Dorsolateral prefrontal cortex (tissue), 120 donors: ENCODE measurements at regions of chr4 and their contacts with region 1.

Region 1: DNA sequence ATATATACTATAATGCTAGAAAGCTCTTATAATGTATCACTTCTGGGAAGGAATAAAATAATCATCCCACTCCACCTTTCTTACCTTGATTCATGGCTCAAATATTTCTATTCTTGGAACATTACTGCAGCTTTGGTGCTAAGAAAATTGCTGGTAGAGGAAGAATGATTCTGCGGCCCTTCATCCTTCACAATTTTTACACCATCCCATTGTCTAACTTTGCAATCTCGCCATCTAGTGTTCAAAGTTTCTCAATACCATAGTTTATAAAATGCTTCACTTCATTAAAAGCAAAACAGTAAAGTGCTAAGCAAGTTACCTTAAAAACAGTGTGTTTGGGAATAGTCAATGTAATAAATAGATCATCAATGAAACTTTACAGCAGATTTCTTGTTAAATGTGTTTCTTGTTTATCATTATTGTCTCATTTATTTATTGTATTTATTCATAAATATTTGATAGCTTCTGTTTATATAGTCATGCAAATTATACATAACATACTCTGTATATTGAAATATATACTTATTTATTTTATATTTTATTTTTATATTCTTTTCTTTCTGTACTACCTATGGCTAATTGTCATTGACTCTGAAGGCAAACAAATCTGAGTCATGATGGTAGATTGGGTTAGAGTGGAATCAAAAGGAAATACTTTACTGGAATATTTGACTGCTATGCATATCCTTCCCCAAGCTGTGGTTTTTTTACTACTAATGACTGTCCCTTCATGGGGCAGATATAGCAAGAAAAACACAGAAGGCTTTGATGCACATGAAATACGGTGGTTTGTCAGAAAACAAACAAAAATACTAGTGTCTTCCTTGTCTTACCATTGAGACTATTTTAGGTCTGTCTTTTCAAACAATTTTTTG is 390.7 kb downstream of the MAPK10 start:
- DNase-seq: no peak
- H3K4me3 ChIP-seq: no peak overlapping the region
- H3K27ac ChIP-seq: no peak overlapping the region
- H3K27me3 ChIP-seq: no peaks in the 10 kb centered on the region
- CTCF ChIP-seq: peak; percentile 51 to 89 (median 71)

Region 2: DNA sequence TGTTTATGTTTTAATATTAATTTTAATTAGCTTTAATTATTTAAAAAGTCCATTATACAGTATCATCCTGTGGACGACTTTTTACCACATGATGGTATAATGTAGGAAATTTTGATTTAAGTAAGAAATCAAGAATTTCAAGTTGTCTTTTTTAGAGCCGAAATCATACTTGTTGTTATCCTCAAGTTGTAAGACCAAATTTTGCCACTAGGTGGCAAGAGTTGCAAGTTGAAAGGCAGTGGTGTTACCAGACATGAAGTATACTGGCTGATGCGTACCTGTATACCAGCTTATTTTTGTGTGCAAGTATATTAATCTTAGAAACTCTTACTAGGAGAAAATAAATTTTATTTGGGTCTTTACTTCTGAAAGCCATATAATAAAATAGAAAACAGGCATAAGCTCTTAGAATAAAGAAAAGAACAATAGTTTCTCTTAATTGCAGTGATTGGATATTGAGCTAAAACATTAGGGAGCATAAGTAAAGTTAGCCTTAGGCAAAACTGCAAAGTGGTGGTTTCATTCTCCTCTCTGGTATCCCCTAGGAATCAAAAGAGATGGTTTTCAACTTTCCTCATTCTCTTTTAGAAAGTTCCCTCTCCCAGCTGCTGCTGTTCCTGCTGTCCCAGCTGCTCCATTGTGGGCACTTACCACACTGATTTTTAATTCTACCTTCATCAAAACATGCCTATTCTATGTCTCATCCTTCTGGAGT is 884.6 kb before region 1 on chr4:
- intact Hi-C with region 1: loop called in 1 of 2 experiments (anchors 5 kb)
- DNase-seq: peak in 2 of 10 donors; percentile 8 to 51
- H3K4me3 ChIP-seq: no peak overlapping the region
- H3K27ac ChIP-seq: no peak overlapping the region
- H3K27me3 ChIP-seq: no peaks in the 10 kb centered on the region
- CTCF ChIP-seq: peak; percentile 65 to 88 (median 77)

Region 3: DNA sequence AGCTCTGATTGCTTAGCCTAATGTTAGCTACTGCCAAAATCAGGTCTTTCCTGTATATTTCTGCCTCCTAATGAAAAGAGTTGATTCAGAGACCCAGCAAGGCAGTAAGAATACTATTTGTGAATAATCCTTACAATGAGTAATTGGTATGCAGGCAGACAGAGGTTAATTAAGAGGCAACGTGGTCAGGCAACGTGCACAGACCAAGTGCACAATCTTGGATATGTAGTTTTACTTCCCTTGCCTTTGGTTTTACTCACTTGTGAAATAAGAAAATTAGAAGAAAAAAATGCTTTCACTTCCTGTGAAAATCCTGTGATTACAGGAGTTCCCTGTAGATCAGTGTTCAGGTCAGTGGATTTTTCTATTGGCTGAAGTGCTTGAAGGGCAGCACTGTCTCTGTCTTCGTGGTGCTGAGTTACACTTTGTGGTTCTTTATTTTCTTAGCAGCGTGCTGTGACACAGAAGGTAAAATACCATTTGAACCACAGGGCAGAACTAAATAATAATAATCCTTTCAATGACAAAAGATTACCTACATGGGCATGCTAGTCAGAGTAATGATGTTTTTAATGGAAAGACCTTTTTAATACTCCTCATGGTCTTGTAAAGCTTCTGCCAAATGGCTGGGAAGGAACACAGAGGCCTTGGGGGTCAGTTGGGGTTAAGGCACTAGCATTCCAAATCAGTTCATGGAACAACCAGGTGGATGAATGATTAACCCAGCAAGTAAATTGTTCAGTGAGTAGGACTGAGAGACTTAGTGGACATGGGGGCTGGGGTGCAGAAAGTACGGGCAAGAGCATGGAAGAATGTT is 40.2 kb before region 1 on chr4:
- intact Hi-C with region 1: no loop called
- DNase-seq: no peak
- H3K4me3 ChIP-seq: no peak overlapping the region
- H3K27ac ChIP-seq: no peak overlapping the region
- H3K27me3 ChIP-seq: peaks cover 0 to 5% (median 0%) of the 10 kb centered on the region in 45 donors
- CTCF ChIP-seq: no peak